Posterior cingulate gyrus (tissue), 11 donors: ENCODE measurements at regions of chr1 and their contacts with region 1.

Region 1: GRCh38 chr1:160637821-160638539 is 8.9 kb downstream of the SLAMF1 start:
- DNase-seq: no peak

Region 2: DNA sequence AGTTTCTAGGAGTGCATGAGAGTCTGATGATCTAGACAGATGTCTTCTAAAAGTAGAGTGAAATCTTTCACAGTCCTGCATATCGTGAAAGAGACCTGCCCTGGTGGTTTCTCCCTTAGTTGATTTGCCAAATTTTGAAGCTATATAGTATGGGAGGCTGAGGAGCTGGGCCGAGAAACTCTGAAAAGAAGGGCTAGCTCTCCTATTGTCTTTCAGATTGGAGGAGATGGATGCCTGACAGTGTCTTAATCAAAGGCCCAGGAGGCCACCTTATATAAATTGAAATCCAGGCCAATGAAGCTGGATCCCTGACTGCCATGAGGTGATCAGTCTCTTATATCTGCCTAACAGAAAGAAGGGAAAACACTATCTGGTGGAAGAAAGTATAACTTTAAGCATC is 40.3 kb before region 1 on chr1:
- intact Hi-C with region 1: loop called (anchors 2 kb)
- DNase-seq: no peak